HepG2 (cell line): ENCODE measurements at regions of chr19 and their contacts with region 1.

Region 1: GRCh38 chr19:45717166-45717982 is 13.3 kb downstream of the FBXO46 start:
- DNase-seq: peak; percentile 99
- ATAC-seq: peak; percentile 94
- H3K4me3 ChIP-seq: peak overlapping the region; percentile 71 to 79 (median 73)
- H3K27ac ChIP-seq: peak overlapping the region; percentile 91
- H3K4me1 ChIP-seq: peaks cover 65% of the 10 kb centered on the region
- H3K27me3 ChIP-seq: no peaks in the 10 kb centered on the region; a peak in 1 of 5 replicates
- CTCF ChIP-seq: peak; percentile 37
- EP300 ChIP-seq: peak in 1 of 2 experiments; percentile 66; a peak in 2 of 4 replicates
- POLR2A ChIP-seq: peak; percentile 41 to 60; a peak in 3 of 4 replicates
- RAD21 ChIP-seq: peak; percentile 8; the same call in 1 of the 2 replicates

Region 2: GRCh38 chr19:45705115-45705514 is 12.3 kb before region 1 on chr19:
- CTCF ChIA-PET with region 1: no interaction called
- POLR2A ChIA-PET with region 1: interaction called, 24 read pairs
- in situ Hi-C with region 1: no loop called
- intact Hi-C with region 1: no loop called
- DNase-seq: no peak
- ATAC-seq: no peak
- H3K4me3 ChIP-seq: no peak overlapping the region
- H3K27ac ChIP-seq: no peak overlapping the region
- H3K4me1 ChIP-seq: no peaks in the 10 kb centered on the region
- H3K27me3 ChIP-seq: no peaks in the 10 kb centered on the region
- CTCF ChIP-seq: no peak
- EP300 ChIP-seq: no peak
- POLR2A ChIP-seq: no peak
- RAD21 ChIP-seq: no peak

Region 3: GRCh38 chr19:45730389-45731288 is 13.3 kb after region 1 on chr19 and contains the start of gene FBXO46:
- CTCF ChIA-PET with region 1: no interaction called
- POLR2A ChIA-PET with region 1: interaction called, 33 read pairs
- in situ Hi-C with region 1: no loop called
- intact Hi-C with region 1: no loop called
- DNase-seq: peak; percentile 96
- ATAC-seq: peak; percentile 98
- H3K4me3 ChIP-seq: peak within 1 kb of the TSS; percentile 85 to 94 (median 90)
- H3K27ac ChIP-seq: peak within 1 kb of the TSS; percentile 50
- H3K4me1 ChIP-seq: peaks cover 40% of the 10 kb centered on the region
- H3K27me3 ChIP-seq: peaks cover 0 to 4% of the 10 kb centered on the region in 2 experiments; a peak in 1 of 5 replicates
- CTCF ChIP-seq: peak; percentile 75
- EP300 ChIP-seq: peak in 1 of 2 experiments; percentile 12; a peak in 1 of 4 replicates
- POLR2A ChIP-seq: peak in 1 of 2 experiments; percentile 84; a peak in 2 of 4 replicates
- RAD21 ChIP-seq: no peak
- total RNA-seq, gene FBXO46: 4.7 and 6.2 TPM in 2 replicates

Region 4: GRCh38 chr19:45757691-45758090 is 40.3 kb after region 1 on chr19:
- CTCF ChIA-PET with region 1: no interaction called
- POLR2A ChIA-PET with region 1: no interaction called
- in situ Hi-C with region 1: no loop called
- intact Hi-C with region 1: no loop called
- DNase-seq: no peak
- ATAC-seq: no peak
- H3K4me3 ChIP-seq: no peak overlapping the region
- H3K27ac ChIP-seq: no peak overlapping the region
- H3K4me1 ChIP-seq: peaks cover 20% of the 10 kb centered on the region
- H3K27me3 ChIP-seq: peaks cover 7 to 52% of the 10 kb centered on the region in 2 experiments; a peak in 4 of 5 replicates
- CTCF ChIP-seq: no peak
- EP300 ChIP-seq: no peak
- POLR2A ChIP-seq: no peak
- RAD21 ChIP-seq: no peak

Region 5: DNA sequence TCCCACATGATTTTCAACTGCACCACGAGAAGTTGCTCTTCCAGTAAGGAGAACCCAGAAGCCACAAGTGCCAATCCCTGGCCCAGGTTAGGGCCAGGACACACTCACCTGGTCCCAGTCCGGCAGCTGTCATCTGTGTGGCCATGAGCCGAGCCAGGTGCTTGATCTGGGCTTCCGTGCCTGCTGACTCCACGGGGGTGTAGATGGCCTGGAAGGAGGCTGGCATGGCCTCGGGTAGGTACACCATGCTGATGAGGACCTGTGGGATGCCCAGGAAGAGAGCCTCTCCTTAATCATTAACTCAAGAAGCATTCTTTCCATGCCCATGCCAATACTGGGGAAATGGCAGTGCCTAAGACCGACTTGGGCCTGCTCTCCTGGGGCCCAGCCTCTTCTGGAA is 117.6 kb after region 1 on chr19:
- CTCF ChIA-PET with region 1: no interaction called
- POLR2A ChIA-PET with region 1: no interaction called
- in situ Hi-C with region 1: no loop called
- intact Hi-C with region 1: no loop called
- DNase-seq: no peak
- ATAC-seq: no peak
- H3K4me3 ChIP-seq: no peak overlapping the region
- H3K27ac ChIP-seq: no peak overlapping the region
- H3K4me1 ChIP-seq: no peaks in the 10 kb centered on the region
- H3K27me3 ChIP-seq: no peaks in the 10 kb centered on the region
- CTCF ChIP-seq: no peak
- EP300 ChIP-seq: no peak
- POLR2A ChIP-seq: no peak
- RAD21 ChIP-seq: no peak